ENCODE measurements at regions of chr6 and their contacts with region 1.

Region 1: GRCh38 chr6:89610149-89610642 is 28.4 kb downstream of the LYRM2 start:
- DNase-seq: peak; percentile 45 to 84
- ATAC-seq: peak; percentile 76

Region 2: GRCh38 chr6:89432875-89433251 is 177.3 kb before region 1 on chr6 and contains the start of gene ANKRD6:
- intact Hi-C with region 1: loop called (anchors 5 kb)
- DNase-seq: peak; percentile 33 to 84
- ATAC-seq: peak; percentile 98
- total RNA-seq, gene ANKRD6: 2.7 to 3.1 TPM